ENCODE measurements at regions of chr9 and their contacts with region 1.

Region 1: DNA sequence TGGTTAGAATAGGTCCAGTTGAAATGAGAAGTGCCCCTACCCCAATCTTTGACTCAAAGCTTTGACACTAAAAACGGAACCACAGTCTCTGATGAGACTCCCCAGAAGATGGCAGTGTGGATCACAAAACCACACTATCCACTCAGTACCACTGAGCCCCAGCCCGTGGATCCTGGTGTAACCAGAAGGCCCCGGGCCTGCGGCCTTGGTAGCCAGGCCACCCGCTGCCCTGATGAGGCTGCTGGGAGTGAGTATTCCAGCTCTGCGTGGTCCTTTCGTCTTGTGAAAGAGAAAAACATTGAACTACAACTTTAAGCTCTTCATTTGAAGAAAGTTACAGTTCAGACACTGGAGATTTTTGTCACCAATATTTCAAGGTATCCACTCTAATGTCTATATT is 42.2 kb upstream of the FBP1 start:
- DNase-seq: no peak
- H3K4me3 ChIP-seq: no peak overlapping the region
- CTCF ChIP-seq: peak; percentile 71

Region 2: DNA sequence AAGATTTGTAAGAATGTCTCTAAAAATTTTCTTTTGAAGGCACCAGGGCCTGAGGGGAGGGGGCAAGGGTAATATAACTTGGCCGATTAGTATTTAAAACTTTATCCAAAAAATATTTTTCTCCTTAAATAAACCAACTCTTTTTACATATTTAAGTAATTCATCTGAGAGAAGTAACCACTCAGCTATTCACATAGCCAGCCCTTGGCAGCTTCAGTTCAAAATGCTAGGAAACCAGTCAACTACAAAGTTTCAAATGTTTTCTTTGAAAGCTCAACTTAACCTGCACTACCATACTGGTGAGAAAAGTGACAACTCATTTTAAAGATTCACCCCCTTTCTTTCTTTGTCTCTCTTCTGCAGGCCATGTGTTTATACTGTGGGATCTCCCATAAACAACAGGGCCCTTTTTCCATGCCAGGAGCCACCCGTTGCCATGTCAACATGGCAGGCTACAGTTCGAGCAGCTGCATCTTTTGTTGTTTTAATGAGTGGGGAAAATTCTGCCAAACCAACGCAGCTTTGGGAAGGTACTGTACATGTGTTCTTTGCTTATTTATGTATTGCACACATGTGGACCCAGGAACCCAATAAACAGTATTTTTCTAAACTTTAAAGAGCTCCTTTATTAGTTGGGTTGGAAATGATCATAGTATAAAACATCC is 91.3 kb after region 1 on chr9:
- CTCF ChIA-PET with region 1: interaction called, 11 read pairs
- POLR2A ChIA-PET with region 1: no interaction called
- DNase-seq: no peak
- H3K4me3 ChIP-seq: no peak overlapping the region
- CTCF ChIP-seq: no peak

Region 3: GRCh38 chr9:94903961-94904421 is 222.5 kb after region 1 on chr9:
- CTCF ChIA-PET with region 1: interaction called, 10 read pairs
- POLR2A ChIA-PET with region 1: no interaction called
- DNase-seq: peak; percentile 78
- H3K4me3 ChIP-seq: no peak overlapping the region
- CTCF ChIP-seq: no peak

Region 4: DNA sequence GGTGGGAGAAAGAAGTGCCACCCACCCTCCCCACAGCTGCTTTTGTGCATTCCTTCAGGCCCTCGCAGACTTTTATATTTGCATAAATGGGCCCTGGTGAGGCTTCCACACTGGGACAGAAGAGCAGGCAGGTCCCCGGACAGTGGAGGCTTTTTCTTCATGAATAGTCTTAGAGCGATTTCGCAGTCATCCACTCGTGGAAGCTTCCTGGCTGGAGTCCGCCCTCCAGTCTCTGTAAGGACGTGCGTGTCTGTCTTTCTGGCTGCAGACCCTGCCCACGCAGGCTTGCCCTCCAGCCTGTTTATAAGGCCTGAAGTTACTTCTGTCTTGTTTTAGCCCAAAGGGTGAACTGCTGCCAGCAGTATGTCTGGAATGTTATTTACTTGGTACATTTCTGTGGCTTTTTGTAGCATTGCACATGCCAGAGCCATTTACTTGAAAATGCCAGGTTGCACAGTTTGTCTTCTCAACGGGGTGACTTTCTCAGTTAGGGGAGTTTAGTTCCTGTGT is 240.6 kb after region 1 on chr9:
- CTCF ChIA-PET with region 1: interaction called, 11 read pairs
- POLR2A ChIA-PET with region 1: no interaction called
- DNase-seq: peak; percentile 99
- H3K4me3 ChIP-seq: no peak overlapping the region
- CTCF ChIP-seq: no peak

Region 5: GRCh38 chr9:95025213-95026147 is 344.0 kb after region 1 on chr9:
- CTCF ChIA-PET with region 1: interaction called, 22 read pairs
- POLR2A ChIA-PET with region 1: no interaction called
- DNase-seq: peak; percentile 88
- H3K4me3 ChIP-seq: no peak overlapping the region
- CTCF ChIP-seq: peak; percentile 47

Region 6: DNA sequence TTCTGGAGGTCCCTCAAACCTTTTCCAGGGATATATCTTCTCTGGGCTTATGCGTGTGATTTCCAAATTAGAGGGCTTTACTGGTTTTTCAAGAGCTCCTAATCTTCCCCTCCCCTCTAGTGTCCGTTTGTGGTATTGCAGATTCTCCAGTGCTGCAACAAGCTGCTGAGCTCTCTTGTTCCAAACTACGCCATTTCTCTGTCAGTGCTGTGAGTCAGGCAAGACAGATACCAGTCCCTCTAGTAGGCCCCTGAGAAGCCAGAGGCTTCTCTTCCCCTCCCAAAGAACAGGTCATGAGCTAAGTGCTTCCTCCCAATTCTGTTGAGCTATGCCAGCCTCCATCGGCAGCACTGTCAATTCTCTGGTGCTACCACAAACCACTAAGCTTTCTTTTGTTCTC is 486.5 kb after region 1 on chr9:
- CTCF ChIA-PET with region 1: interaction called, 30 read pairs
- POLR2A ChIA-PET with region 1: no interaction called
- DNase-seq: peak; percentile 78
- H3K4me3 ChIP-seq: no peak overlapping the region
- CTCF ChIP-seq: peak; percentile 77